ENCODE measurements at regions of chr5 and their contacts with region 1.

Region 1: GRCh38 chr5:81851481-81852178 is 100.7 kb upstream of the SSBP2 start:
- DNase-seq: peak; percentile 96 to 98 (median 97)
- ATAC-seq: peak; percentile 93 to 96 (median 94)
- H3K4me3 ChIP-seq: peak overlapping the region in 11 of 12 donors; percentile 23 to 71 (median 56)
- H3K27ac ChIP-seq: peak overlapping the region; percentile 80 to 99 (median 92)
- H3K4me1 ChIP-seq: peaks cover 0 to 79% (median 47%) of the 10 kb centered on the region in 12 donors
- H3K27me3 ChIP-seq: no peaks in the 10 kb centered on the region
- CTCF ChIP-seq: no peak
- POLR2A ChIP-seq: peak in 1 of 2 donors; percentile 58

Region 2: DNA sequence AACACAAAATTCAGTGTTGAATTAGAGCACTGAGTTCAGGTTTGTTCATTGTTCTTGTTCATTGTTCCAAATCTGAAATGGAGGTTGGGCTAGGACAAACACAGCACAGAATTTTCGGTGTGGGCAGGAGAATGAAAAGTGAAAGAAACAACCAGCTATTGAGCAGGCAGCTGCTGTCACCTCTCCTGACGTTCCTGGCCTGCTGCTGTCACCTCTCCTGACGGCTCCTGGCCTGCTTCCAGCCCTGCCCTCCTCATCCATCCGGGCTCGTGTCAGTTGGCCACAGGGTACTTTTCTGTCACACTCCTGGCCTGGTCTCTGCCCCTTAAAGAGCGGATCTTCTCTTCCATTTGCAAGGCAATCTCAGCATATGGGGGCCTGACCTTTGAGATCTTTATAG is 663.7 kb before region 1 on chr5:
- intact Hi-C with region 1: no loop called
- DNase-seq: peak; percentile 60 to 79 (median 76)
- ATAC-seq: peak in 3 of 4 donors; percentile 68 to 83 (median 79)
- H3K4me3 ChIP-seq: no peak overlapping the region
- H3K27ac ChIP-seq: peak overlapping the region in 8 of 12 donors; percentile 30 to 67 (median 38)
- H3K4me1 ChIP-seq: peaks cover 0 to 17% (median 1%) of the 10 kb centered on the region in 12 donors
- H3K27me3 ChIP-seq: no peaks in the 10 kb centered on the region
- CTCF ChIP-seq: no peak
- POLR2A ChIP-seq: no peak

Region 3: DNA sequence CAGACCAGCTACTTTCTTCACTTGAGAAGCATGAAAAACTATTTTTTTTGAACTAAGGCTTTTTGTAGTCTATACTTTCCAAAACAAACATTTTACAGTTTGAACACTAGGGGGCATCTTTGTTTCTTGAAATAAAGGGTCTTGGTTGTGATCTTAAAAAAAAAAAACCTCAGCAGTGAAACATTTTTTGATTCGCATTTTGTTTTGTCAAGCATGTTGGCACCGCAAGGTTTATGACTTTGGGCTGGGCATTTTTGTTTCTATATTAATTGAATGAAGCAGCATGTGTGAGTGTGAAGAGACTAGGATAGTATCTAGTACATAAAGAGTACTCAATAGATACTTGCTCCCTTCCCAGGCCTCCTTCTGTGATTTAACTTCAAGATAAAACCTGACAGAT is 426.1 kb before region 1 on chr5:
- intact Hi-C with region 1: loop called in 4 of 10 experiments (anchors 5 to 10 kb)
- DNase-seq: no peak
- ATAC-seq: peak in 3 of 4 donors; percentile 35 to 62 (median 59)
- H3K4me3 ChIP-seq: no peak overlapping the region
- H3K27ac ChIP-seq: peak overlapping the region in 4 of 12 donors; percentile 1 to 28 (median 7)
- H3K4me1 ChIP-seq: peaks cover 4 to 26% (median 12%) of the 10 kb centered on the region in 12 donors
- H3K27me3 ChIP-seq: no peaks in the 10 kb centered on the region
- CTCF ChIP-seq: peak; percentile 56 to 82 (median 66)
- POLR2A ChIP-seq: no peak

Region 4: DNA sequence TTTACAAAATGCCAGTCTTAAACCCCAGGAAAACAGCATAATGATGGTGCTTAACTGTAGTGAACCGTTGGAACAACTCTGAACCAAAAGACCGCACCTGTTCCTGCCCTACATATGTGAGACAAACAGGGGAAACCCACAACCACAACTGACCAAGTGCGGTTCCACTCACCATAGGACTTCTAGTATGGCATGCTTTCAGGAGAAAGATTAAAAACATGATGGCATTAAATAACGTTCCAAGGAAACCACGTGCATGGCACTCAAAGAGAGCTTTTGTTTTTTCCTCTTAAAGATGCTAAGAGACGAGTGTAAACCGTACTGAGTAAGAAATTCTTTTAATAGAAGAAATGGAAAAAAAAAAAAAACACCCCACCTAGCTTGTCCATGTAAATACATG is 220.5 kb before region 1 on chr5:
- intact Hi-C with region 1: loop called in 1 of 10 experiments (anchors 10 kb)
- DNase-seq: no peak
- ATAC-seq: no peak
- H3K4me3 ChIP-seq: no peak overlapping the region
- H3K27ac ChIP-seq: no peak overlapping the region
- H3K4me1 ChIP-seq: peaks cover 0 to 12% (median 4%) of the 10 kb centered on the region in 12 donors
- H3K27me3 ChIP-seq: no peaks in the 10 kb centered on the region
- CTCF ChIP-seq: no peak
- POLR2A ChIP-seq: no peak

Region 5: GRCh38 chr5:81708889-81709288 is 142.7 kb before region 1 on chr5:
- intact Hi-C with region 1: no loop called
- DNase-seq: no peak
- ATAC-seq: no peak
- H3K4me3 ChIP-seq: no peak overlapping the region
- H3K27ac ChIP-seq: no peak overlapping the region
- H3K4me1 ChIP-seq: peaks cover 0 to 16% (median 0%) of the 10 kb centered on the region in 12 donors
- H3K27me3 ChIP-seq: no peaks in the 10 kb centered on the region
- CTCF ChIP-seq: no peak
- POLR2A ChIP-seq: no peak

Region 6: GRCh38 chr5:81728301-81728700 is 123.3 kb before region 1 on chr5:
- intact Hi-C with region 1: no loop called
- DNase-seq: no peak
- ATAC-seq: no peak
- H3K4me3 ChIP-seq: no peak overlapping the region
- H3K27ac ChIP-seq: no peak overlapping the region
- H3K4me1 ChIP-seq: peaks cover 0 to 28% (median 6%) of the 10 kb centered on the region in 12 donors
- H3K27me3 ChIP-seq: no peaks in the 10 kb centered on the region
- CTCF ChIP-seq: no peak
- POLR2A ChIP-seq: no peak

Region 7: GRCh38 chr5:81800797-81801196 is 50.8 kb before region 1 on chr5:
- intact Hi-C with region 1: loop called in 1 of 10 experiments (anchors 5 kb)
- DNase-seq: no peak
- ATAC-seq: no peak
- H3K4me3 ChIP-seq: no peak overlapping the region
- H3K27ac ChIP-seq: no peak overlapping the region
- H3K4me1 ChIP-seq: peaks cover 0 to 7% (median 0%) of the 10 kb centered on the region in 12 donors
- H3K27me3 ChIP-seq: no peaks in the 10 kb centered on the region
- CTCF ChIP-seq: no peak
- POLR2A ChIP-seq: no peak

Region 8: GRCh38 chr5:82165740-82166530 is 314.3 kb after region 1 on chr5:
- intact Hi-C with region 1: loop called in 8 of 10 experiments (anchors 5 to 10 kb)
- DNase-seq: peak in 4 of 5 donors; percentile 64 to 81 (median 78)
- ATAC-seq: peak; percentile 98 to 100 (median 100)
- H3K4me3 ChIP-seq: no peak overlapping the region
- H3K27ac ChIP-seq: peak overlapping the region in 10 of 12 donors; percentile 5 to 55 (median 38)
- H3K4me1 ChIP-seq: peaks cover 0 to 26% (median 12%) of the 10 kb centered on the region in 12 donors
- H3K27me3 ChIP-seq: no peaks in the 10 kb centered on the region
- CTCF ChIP-seq: peak; percentile 53 to 87 (median 76)
- POLR2A ChIP-seq: no peak